Aorta (tissue), 5 donors: ENCODE measurements at regions of chr11 and their contacts with region 1.

Region 1: DNA sequence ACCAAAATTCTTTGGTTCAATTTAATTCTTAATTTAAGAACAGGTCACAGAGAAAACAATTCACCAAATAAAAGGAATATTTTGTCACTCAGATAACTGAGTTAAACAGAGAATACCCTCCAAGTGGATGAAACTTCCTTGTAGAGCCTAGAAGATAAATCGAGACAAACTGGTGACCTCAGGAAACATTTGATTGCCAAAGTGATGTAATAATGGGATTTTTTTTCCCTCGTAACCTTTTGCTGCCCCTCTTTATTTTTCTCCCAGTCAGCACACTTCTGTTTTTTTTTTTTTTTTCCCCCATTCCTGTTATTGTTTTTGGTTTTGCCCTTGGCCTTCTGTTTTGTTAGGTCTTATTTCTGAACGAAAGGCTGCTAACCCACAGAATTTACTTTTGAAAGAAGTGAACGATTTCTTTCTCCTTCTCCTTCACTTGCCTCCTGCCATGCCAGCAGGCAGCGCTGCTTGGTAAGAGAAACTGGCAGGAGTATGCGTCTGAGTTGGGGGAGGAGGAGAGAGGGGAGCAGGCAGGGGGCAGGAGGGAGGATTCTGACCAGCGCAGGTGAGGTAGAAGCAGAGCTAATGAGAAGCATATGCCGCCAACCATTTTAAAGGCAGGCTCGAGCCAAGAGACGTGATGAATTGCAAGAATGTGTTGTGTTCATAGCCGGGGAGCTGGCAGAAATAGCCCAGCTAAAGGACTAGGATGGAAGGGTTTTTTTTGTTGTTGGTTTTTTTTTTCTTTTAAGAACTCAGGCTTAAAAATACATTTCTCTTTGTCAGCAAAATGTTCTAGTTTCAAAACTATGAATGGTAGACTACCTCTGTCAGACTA is 121.9 kb upstream of the MTMR2 start:
- DNase-seq: peak; percentile 77 to 85
- ATAC-seq: peak; percentile 85
- H3K4me3 ChIP-seq: peak overlapping the region in 1 of 2 donors; percentile 12
- H3K27ac ChIP-seq: peak overlapping the region; percentile 6 to 96
- H3K4me1 ChIP-seq: peaks cover 0 to 6% of the 10 kb centered on the region in 2 donors
- H3K27me3 ChIP-seq: no peaks in the 10 kb centered on the region

Region 2: GRCh38 chr11:95923728-95924413 is 122.0 kb before region 1 on chr11 and contains the start of gene MTMR2:
- intact Hi-C with region 1: loop called in 1 of 2 experiments (anchors 5 kb)
- DNase-seq: peak; percentile 85 to 93
- ATAC-seq: peak; percentile 99
- H3K4me3 ChIP-seq: peak within 1 kb of the TSS; percentile 92 to 94
- H3K27ac ChIP-seq: peak within 1 kb of the TSS; percentile 94 to 99
- H3K4me1 ChIP-seq: peaks cover 1 to 4% of the 10 kb centered on the region in 2 donors
- H3K27me3 ChIP-seq: no peaks in the 10 kb centered on the region
- total RNA-seq, gene MTMR2: 36.4 to 40.6 TPM

Region 3: GRCh38 chr11:96023275-96023674 is 22.6 kb before region 1 on chr11:
- intact Hi-C with region 1: no loop called
- DNase-seq: no peak
- ATAC-seq: no peak
- H3K4me3 ChIP-seq: no peak overlapping the region
- H3K27ac ChIP-seq: no peak overlapping the region
- H3K4me1 ChIP-seq: peaks cover 0 to 3% of the 10 kb centered on the region in 2 donors
- H3K27me3 ChIP-seq: no peaks in the 10 kb centered on the region